Body of pancreas (tissue), 4 donors: ENCODE measurements at regions of chr9 and their contacts with region 1.

Region 1: GRCh38 chr9:35882263-35882848 is 12.2 kb upstream of the OR13J1 start:
- DNase-seq: peak; percentile 84 to 91 (median 86)
- ATAC-seq: peak; percentile 90
- H3K4me3 ChIP-seq: no peak overlapping the region
- H3K27ac ChIP-seq: no peak overlapping the region
- H3K4me1 ChIP-seq: no peaks in the 10 kb centered on the region
- H3K27me3 ChIP-seq: no peaks in the 10 kb centered on the region
- CTCF ChIP-seq: peak; percentile 74 to 98 (median 94)
- POLR2A ChIP-seq: no peak

Region 2: DNA sequence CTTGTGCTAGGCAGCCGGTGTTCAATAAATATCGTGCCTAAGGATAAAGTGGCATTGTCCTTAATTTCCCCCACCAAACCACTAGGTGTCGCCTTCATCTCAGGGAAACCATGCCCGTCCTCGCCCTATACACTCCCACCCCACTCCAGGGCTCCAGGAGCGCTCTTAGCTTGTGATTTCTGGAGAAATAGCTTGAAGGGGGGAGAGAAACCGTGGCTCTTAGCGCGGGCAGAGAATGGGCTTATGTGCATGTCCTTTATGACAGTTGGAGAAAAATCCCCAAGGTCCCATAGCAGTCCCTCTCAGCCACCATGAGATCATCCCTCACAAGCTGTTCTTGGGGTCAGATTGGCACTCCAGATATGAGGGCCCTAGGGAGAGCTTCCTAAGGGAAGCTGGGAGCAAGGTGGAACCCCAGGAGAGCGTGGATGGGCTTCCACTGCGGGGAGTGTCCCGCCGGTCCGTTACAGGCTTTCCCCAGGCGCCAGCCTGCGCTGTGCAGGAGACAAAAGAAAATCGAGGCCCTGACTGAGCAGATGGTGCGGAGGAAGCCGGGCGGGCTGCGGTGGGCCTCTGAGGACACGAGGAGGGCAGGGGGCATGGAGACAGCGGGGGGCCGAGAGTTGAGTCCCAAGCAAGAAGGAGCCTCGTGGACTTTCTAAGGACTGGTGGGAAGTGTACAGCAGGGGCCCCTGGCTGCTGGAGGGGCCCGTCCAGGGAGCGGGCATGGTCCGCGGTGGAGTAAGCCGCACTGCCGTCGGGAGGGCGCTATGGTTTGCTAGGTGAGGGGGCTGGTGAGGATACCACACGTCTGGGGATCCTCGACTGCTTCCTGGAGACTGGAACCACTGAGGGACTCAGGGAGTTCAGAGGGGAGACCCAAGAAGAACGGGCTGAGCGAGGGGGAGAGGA is 91.7 kb before region 1 on chr9:
- intact Hi-C with region 1: loop called (anchors 5 kb)
- DNase-seq: peak; percentile 66 to 78 (median 72)
- ATAC-seq: peak; percentile 94
- H3K4me3 ChIP-seq: no peak overlapping the region
- H3K27ac ChIP-seq: no peak overlapping the region
- H3K4me1 ChIP-seq: peaks cover 7% of the 10 kb centered on the region
- H3K27me3 ChIP-seq: no peaks in the 10 kb centered on the region
- CTCF ChIP-seq: peak; percentile 70 to 96 (median 86)
- POLR2A ChIP-seq: no peak

Region 3: GRCh38 chr9:35801328-35802128 is 80.8 kb before region 1 on chr9:
- intact Hi-C with region 1: no loop called
- DNase-seq: no peak
- ATAC-seq: no peak
- H3K4me3 ChIP-seq: no peak overlapping the region
- H3K27ac ChIP-seq: no peak overlapping the region
- H3K4me1 ChIP-seq: no peaks in the 10 kb centered on the region
- H3K27me3 ChIP-seq: no peaks in the 10 kb centered on the region
- CTCF ChIP-seq: no peak
- POLR2A ChIP-seq: no peak

Region 4: DNA sequence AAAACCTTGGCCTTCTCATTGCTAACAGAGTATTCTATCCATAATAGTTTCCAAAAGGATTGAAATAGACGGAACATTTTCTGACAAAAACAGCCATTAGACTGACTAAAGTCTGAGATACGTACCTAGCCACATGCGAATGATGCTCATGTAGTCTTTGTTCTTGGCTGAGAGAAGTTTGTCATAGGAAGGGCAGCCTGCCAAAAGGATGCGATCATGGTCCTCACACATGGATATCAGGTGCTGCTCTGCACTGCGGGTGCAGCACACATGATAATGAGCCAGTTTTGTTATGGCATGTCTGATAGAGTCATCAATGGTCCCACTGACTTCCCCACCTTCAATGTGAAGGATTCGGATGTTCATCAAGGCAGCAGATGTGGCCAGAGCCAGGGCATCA is 363.6 kb after region 1 on chr9:
- intact Hi-C with region 1: no loop called
- DNase-seq: no peak
- ATAC-seq: no peak
- H3K4me3 ChIP-seq: no peak overlapping the region
- H3K27ac ChIP-seq: no peak overlapping the region
- H3K4me1 ChIP-seq: no peaks in the 10 kb centered on the region
- H3K27me3 ChIP-seq: no peaks in the 10 kb centered on the region
- CTCF ChIP-seq: no peak
- POLR2A ChIP-seq: no peak